ENCODE measurements at regions of chr15 and their contacts with region 1.

Region 1: DNA sequence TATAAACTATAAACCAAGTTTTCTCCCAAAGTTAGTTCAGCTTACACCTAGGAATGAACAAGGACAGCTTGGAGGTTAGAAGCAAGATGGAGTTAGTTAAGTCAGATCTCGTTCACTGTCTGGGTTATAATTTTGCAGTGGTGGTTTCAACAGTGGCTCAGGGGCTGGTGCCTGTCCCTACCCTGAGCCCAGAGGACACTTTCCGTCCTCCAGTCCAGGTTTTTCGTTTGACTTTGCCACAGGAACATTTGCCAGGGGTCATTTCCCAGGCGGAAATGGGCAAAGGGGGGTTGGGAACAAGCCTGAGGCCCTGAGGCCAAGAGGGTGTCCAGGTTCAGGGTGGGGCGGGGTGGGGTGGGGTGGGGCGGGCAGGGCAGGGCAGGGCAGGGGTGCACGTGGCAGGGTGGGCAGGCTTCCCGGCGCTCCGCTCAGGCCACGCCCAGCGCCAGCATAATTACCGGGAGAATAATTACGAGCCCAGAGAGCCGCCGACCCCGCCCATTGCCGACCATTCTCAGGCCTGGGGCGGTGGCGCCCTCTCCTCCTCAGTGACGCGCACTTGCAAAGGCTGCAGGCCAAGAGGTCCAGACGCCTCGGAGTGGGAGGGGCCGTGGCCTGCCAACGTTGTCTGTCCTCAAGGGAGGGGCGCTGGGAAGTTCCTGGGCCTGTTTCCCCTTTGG is 70.4 kb downstream of the KLF13 start:
- DNase-seq: peak; percentile 89 to 96
- ATAC-seq: peak; percentile 77 to 84
- H3K4me3 ChIP-seq: peak overlapping the region; percentile 1 to 41 (median 31)
- H3K27ac ChIP-seq: peak overlapping the region; percentile 87 to 93 (median 90)
- H3K4me1 ChIP-seq: peaks cover 23 to 27% of the 10 kb centered on the region in 2 donors
- H3K27me3 ChIP-seq: no peaks in the 10 kb centered on the region
- CTCF ChIP-seq: peak in 2 of 5 experiments; percentile 20 to 32
- POLR2A ChIP-seq: no peak

Region 2: DNA sequence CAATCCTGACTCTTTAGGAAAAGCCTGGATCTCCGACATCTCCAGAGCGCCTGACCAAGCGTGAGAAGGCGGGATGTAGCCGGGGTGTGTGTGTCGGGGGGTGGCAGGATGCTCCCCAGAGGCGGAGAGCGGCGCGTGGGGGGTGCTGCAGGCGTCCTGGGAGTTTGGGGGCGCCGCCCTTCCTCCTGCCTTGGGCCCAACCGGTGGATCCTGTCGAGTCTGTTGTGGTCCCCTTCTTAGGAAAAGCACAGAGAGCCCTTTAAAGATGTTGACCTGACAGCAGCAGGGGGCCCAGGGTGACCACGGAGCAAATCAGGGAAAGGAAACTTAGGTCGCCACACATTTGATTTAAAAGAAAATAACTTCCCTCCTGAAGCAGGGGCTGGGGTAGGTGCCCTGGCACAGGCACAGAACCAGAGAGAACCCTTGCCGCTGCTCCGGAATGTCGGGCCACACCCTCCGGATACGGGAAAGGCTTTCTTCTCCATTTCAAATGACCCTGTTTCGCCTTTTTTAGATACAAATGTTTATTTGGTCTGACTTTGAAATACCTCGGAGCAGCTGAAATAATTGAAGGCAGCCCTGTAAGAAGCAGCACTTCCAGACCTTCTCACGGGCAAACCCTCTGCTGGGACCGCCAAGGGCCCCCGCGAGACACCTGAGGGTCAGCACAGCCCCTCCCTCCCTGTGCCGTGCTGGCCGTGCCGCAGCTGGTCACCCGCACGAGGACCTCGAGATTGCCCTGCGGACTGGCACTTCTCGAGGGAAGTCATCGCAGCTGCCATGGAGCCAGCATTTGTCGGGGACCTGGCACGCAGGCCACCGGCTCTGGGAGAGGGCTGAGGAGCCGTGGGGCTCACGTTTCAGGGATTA is 173.3 kb before region 1 on chr15:
- in situ Hi-C with region 1: loop called in 1 of 4 experiments (anchors 10 kb)
- intact Hi-C with region 1: loop called (anchors 2 kb)
- DNase-seq: peak in 1 of 2 donors; percentile 30
- ATAC-seq: peak in 1 of 2 donors; percentile 68
- H3K4me3 ChIP-seq: peak overlapping the region; percentile 26 to 52 (median 40)
- H3K27ac ChIP-seq: peak overlapping the region in 1 of 4 donors; percentile 4
- H3K4me1 ChIP-seq: peaks cover 15 to 27% of the 10 kb centered on the region in 2 donors
- H3K27me3 ChIP-seq: no peaks in the 10 kb centered on the region
- CTCF ChIP-seq: no peak
- POLR2A ChIP-seq: no peak

Region 3: GRCh38 chr15:31296646-31297574 is 100.1 kb before region 1 on chr15:
- in situ Hi-C with region 1: no loop called
- intact Hi-C with region 1: no loop called
- DNase-seq: peak in 1 of 2 donors; percentile 11
- ATAC-seq: no peak
- H3K4me3 ChIP-seq: no peak overlapping the region
- H3K27ac ChIP-seq: no peak overlapping the region
- H3K4me1 ChIP-seq: peaks cover 6% of the 10 kb centered on the region in 2 donors
- H3K27me3 ChIP-seq: no peaks in the 10 kb centered on the region
- CTCF ChIP-seq: no peak
- POLR2A ChIP-seq: no peak

Region 4: DNA sequence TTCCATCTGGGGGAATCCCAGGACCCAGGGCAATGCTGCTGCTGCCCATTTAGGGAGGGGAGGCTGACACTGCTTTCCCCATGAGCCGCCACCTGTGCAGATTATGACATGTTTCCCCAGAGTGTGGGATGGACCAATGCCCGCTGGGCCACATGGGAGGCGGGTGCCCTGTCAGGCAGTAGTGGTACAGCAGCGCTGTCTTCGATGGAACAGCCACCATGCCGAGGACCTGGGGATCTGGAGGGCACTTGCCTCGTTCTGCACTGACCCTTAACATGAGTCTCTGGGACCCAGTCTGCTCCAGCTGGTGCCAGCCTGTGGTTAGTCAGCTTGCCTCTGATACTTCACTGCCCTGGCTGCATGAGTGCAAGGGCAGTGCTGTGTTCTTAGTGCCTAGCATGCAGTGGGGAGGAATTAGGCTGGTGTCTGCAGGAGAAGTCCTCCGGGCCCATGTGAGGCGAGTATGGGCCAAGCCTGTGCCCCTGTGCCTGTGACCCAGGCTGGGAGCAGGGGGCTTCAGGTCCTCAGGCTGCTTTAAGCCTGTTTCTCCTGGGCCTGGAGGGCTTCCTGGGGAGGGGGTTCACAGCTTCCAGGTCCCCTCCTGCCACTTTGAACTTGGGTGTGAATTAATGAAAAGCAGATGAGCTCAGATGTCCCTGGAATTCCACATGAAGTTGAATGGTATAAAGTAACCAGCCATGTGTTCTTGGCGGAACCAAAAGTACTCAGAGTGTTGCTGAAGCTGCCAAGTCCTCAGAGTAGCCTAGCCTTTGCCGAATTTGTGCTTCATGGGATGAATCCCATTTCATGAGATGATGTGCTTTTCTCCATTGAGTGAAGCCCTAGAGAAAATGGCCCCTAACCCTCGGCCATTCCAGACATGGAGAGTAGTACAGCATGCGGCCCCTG is 47.5 kb before region 1 on chr15:
- in situ Hi-C with region 1: no loop called
- intact Hi-C with region 1: loop called (anchors 1 kb)
- DNase-seq: peak; percentile 86 to 97
- ATAC-seq: peak; percentile 44 to 64
- H3K4me3 ChIP-seq: peak overlapping the region in 1 of 4 donors; percentile 14
- H3K27ac ChIP-seq: peak overlapping the region; percentile 95 to 100 (median 97)
- H3K4me1 ChIP-seq: peaks cover 100% of the 10 kb centered on the region in 2 donors
- H3K27me3 ChIP-seq: no peaks in the 10 kb centered on the region
- CTCF ChIP-seq: peak in 1 of 5 experiments; percentile 33
- POLR2A ChIP-seq: peak; percentile 65 to 75

Region 5: GRCh38 chr15:31359702-31360111 is 37.3 kb before region 1 on chr15:
- in situ Hi-C with region 1: no loop called
- intact Hi-C with region 1: no loop called
- DNase-seq: no peak
- ATAC-seq: no peak
- H3K4me3 ChIP-seq: no peak overlapping the region
- H3K27ac ChIP-seq: peak overlapping the region; percentile 95 to 100 (median 97)
- H3K4me1 ChIP-seq: peaks cover 98 to 99% of the 10 kb centered on the region in 2 donors
- H3K27me3 ChIP-seq: no peaks in the 10 kb centered on the region
- CTCF ChIP-seq: no peak
- POLR2A ChIP-seq: no peak

Region 6: DNA sequence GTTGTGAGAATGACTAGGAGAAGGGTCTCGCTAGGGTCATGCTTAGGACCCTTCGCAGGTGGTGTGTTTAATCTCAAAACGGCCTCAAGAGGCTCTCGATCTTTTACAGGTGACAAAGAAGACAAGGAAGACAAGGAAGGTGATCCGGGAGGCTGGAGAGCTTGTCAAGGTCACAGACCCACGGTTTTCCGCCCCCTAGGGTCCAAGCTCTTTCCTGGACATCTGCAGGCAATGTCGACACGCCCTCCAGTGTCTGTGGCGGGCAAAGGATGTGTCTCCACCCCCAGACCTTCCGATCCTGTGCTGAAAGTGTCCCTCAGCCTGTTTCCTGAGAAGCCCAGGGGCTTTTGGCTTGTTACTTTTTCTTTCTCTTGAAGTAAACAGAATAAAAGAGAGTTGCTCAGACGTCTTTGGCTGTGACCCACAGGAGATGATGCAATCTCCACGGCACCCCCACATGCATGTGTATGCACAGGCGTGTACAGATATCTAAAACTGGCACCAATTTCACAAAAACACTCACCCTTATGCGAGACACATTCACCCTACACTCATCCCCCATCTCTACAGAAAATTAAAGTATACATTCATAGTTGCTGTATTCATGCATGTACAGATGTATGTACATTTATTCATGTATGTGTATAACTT is 38.4 kb after region 1 on chr15:
- in situ Hi-C with region 1: no loop called
- intact Hi-C with region 1: loop called (anchors 2 kb)
- DNase-seq: peak; percentile 59 to 81
- ATAC-seq: peak; percentile 77 to 90
- H3K4me3 ChIP-seq: peak overlapping the region in 3 of 4 donors; percentile 3 to 23 (median 7)
- H3K27ac ChIP-seq: peak overlapping the region; percentile 58 to 69 (median 64)
- H3K4me1 ChIP-seq: peaks cover 13 to 14% of the 10 kb centered on the region in 2 donors
- H3K27me3 ChIP-seq: no peaks in the 10 kb centered on the region
- CTCF ChIP-seq: peak; percentile 60 to 80 (median 68)
- POLR2A ChIP-seq: no peak

Region 7: DNA sequence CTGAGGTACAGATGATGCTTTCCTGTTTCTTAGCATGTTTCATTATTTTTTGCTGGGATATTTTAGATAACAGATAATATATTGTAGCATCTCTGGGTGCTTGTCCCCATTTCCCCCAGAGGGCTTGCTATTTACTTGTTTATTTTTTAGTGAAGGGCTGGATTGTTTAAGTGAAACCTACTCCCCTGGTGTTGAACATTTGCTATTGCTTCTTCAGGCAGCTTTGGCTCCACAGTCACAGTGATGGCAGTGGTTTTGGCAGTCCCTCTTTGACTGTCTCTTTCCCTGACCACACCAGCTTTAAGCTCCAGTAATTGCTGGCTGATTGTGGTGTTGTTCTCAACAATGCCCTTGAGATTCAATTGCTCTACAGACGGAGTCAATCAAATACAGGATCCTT is 58.5 kb after region 1 on chr15:
- in situ Hi-C with region 1: no loop called
- intact Hi-C with region 1: no loop called
- DNase-seq: no peak
- ATAC-seq: no peak
- H3K4me3 ChIP-seq: no peak overlapping the region
- H3K27ac ChIP-seq: no peak overlapping the region
- H3K4me1 ChIP-seq: no peaks in the 10 kb centered on the region
- H3K27me3 ChIP-seq: no peaks in the 10 kb centered on the region
- CTCF ChIP-seq: no peak
- POLR2A ChIP-seq: no peak

Measured in gastrocnemius medialis (tissue), 4 donors.